ENCODE measurements at regions of chr11 and their contacts with region 1.

Region 1: GRCh38 chr11:2428322-2428795 is 16.0 kb downstream of the TRPM5 start:
- DNase-seq: peak; percentile 62 to 97 (median 86)
- ATAC-seq: peak; percentile 74 to 94 (median 90)
- H3K4me3 ChIP-seq: no peak overlapping the region
- H3K27ac ChIP-seq: no peak overlapping the region
- H3K4me1 ChIP-seq: no peaks in the 10 kb centered on the region
- H3K27me3 ChIP-seq: no peaks in the 10 kb centered on the region
- CTCF ChIP-seq: peak; percentile 73 to 90 (median 82)

Region 2: GRCh38 chr11:2366261-2366660 is 62.1 kb before region 1 on chr11:
- intact Hi-C with region 1: no loop called
- DNase-seq: peak in 1 of 6 donors; percentile 52
- ATAC-seq: peak in 3 of 4 donors; percentile 30 to 52 (median 31)
- H3K4me3 ChIP-seq: no peak overlapping the region
- H3K27ac ChIP-seq: no peak overlapping the region
- H3K4me1 ChIP-seq: no peaks in the 10 kb centered on the region
- H3K27me3 ChIP-seq: no peaks in the 10 kb centered on the region
- CTCF ChIP-seq: no peak

Region 3: DNA sequence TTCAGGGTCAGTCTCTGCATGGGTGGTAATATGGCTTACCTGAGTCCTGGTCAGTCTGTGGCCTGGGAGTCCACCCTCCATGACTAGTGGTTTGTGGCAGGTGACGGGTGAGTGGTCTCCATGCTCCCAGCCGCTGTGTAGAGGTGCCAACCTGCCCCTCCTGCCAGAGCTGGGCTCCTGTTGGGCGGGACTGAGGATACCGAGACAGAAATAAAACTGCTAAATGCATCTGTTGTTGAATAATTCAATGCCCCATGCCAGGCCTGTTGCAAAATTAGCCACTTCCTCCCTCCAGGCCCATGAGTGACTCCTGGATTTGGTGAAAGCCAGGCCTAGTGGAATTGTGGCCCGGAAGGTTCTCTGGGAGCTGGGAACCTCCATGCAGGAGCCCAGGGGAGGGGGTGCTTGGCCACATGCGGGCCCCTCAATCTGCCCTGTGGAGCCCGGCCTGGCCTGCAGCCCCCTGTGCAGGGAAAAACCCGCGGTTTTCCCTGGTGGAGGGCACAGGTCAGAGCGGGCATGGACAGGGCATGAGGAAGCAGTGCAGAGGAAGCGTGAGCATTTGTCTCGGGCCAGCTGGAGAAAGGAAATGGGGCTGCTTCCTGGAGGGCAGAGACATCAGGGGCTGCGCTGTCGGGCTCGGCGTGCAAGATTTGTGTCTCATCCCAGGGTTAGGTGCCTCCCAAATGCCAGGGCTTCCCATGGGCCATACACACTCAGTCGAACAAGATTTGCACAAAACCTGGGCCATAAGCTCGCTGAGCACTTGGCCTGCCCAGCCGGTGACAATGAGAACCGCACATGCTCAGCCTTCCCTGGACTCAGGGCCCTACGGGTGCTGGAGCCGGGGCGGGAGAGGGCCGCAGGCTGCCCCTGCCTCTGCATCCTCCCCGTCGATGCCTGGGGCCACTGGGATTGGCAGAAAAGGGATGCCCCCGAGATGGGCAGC is 83.3 kb after region 1 on chr11:
- intact Hi-C with region 1: loop called in 1 of 3 experiments (anchors 10 kb)
- DNase-seq: peak in 5 of 6 donors; percentile 6 to 49 (median 17)
- ATAC-seq: peak in 3 of 4 donors; percentile 15 to 39 (median 39)
- H3K4me3 ChIP-seq: no peak overlapping the region
- H3K27ac ChIP-seq: no peak overlapping the region
- H3K4me1 ChIP-seq: no peaks in the 10 kb centered on the region
- H3K27me3 ChIP-seq: no peaks in the 10 kb centered on the region
- CTCF ChIP-seq: no peak

Region 4: DNA sequence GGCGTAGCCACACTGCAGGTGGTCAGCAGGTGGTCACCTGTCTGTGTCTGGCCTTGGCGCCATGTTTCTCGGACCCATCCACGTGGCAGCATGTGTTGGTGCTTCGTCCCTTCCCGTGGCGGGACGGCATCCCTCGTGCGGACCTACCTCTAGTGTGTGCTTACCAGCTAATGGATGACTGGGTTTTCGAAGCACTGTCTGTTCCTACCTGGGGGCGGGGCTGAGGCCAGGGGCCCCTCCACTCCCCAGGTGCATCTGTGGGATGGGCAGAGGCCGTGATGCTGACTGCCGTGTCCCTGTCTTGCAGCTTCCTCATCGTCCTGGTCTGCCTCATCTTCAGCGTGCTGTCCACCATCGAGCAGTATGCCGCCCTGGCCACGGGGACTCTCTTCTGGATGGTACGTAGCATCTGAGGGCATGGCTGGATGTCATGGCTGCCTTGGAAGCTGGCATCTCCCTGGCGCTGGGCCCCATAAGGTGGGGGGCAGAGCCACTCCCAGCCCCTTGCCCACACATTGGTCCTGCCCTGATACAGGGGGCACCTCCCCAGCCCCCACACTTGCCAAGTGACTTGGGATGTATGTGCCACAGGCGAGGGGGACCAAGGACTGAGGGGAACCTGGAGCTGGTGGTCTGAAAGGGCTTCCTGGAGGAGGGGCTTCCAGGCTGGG is 99.4 kb after region 1 on chr11:
- intact Hi-C with region 1: loop called (anchors 2 to 5 kb)
- DNase-seq: peak in 5 of 6 donors; percentile 11 to 58 (median 21)
- ATAC-seq: no peak
- H3K4me3 ChIP-seq: no peak overlapping the region
- H3K27ac ChIP-seq: no peak overlapping the region
- H3K4me1 ChIP-seq: peaks cover 6 to 11% (median 9%) of the 10 kb centered on the region in 3 donors
- H3K27me3 ChIP-seq: no peaks in the 10 kb centered on the region
- CTCF ChIP-seq: no peak

Region 5: GRCh38 chr11:2532704-2533586 is 104.6 kb after region 1 on chr11:
- intact Hi-C with region 1: loop called (anchors 2 to 5 kb)
- DNase-seq: peak; percentile 81 to 99 (median 92)
- ATAC-seq: peak; percentile 82 to 93 (median 86)
- H3K4me3 ChIP-seq: peak overlapping the region in 1 of 4 donors; percentile 34
- H3K27ac ChIP-seq: peak overlapping the region in 3 of 4 donors; percentile 28 to 52 (median 50)
- H3K4me1 ChIP-seq: peaks cover 0 to 5% (median 0%) of the 10 kb centered on the region in 3 donors
- H3K27me3 ChIP-seq: no peaks in the 10 kb centered on the region
- CTCF ChIP-seq: peak; percentile 91 to 99 (median 96)

Region 6: GRCh38 chr11:2549876-2550620 is 121.7 kb after region 1 on chr11:
- intact Hi-C with region 1: no loop called
- DNase-seq: peak in 5 of 6 donors; percentile 2 to 74 (median 42)
- ATAC-seq: peak in 2 of 4 donors; percentile 13 to 29
- H3K4me3 ChIP-seq: no peak overlapping the region
- H3K27ac ChIP-seq: no peak overlapping the region
- H3K4me1 ChIP-seq: no peaks in the 10 kb centered on the region
- H3K27me3 ChIP-seq: no peaks in the 10 kb centered on the region
- CTCF ChIP-seq: no peak

Region 7: DNA sequence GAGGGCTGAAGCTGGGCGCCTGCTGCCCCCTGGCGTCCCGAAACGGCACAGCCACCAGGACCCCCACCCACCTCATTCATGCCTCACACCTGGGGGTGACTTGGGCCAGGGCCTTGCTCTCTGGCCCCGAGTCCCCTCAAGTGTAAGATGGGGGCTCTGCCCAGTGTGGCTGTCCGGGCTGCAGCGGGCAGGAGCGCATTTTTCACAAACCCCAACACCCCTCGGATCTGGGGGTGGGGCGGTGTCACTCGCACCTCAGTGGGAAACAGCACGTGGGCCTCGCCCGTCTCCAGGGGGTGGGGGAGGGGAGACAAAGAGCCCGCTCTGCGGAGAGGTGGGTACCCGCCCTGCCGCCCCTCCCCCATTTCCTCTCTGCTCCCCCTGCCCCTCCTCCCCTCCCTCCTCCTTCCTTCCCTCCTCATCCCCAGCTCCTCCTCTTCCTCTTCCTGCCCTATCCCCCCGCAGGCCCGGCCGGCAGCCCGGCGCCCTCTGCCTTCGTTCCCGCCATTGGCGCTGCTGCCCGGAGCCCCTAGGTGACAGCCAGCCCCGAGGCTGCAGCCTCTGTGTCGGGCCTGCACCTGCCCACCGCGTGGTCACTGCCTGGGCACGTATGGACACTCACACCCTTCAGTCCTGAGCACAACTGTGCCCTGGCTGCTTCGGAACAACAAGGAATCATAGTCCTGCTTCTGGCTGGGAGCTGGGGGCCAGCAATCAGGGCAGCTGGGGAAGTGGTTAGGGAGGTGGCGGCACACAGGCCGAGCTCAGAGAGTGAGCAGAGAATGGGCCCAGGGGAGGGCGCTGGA is 464.1 kb after region 1 on chr11:
- intact Hi-C with region 1: loop called (anchors 5 to 10 kb)
- DNase-seq: peak in 3 of 6 donors; percentile 46 to 80 (median 64)
- ATAC-seq: peak in 3 of 4 donors; percentile 56 to 65 (median 59)
- H3K4me3 ChIP-seq: peak overlapping the region in 1 of 4 donors; percentile 29
- H3K27ac ChIP-seq: peak overlapping the region in 2 of 4 donors; percentile 3 to 13
- H3K4me1 ChIP-seq: peaks cover 14 to 23% (median 17%) of the 10 kb centered on the region in 3 donors
- H3K27me3 ChIP-seq: no peaks in the 10 kb centered on the region
- CTCF ChIP-seq: peak; percentile 69 to 83 (median 80)